ENCODE measurements at regions of chr2 and their contacts with region 1.

Region 1: DNA sequence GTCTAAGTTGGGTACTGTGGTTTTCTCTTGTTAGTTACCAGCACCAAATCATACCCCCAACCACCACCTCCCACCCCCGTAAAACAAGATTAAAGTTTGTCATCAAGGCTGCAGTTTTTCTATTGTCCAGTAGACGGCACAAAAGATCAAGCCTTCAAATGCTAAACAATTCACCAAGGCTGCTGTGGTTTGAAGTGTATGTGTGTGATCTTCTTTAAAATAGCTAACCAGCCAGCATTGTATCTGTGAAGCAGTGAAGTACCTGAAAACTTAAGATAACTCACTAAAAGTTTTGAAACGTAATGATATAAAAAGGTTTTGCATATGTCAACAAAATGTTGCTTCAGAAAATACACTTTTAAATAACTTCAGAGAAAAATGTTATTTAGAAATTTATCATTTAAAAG is 5.9 kb upstream of the MEIS1 start:
- DNase-seq: no peak
- H3K4me3 ChIP-seq: no peak overlapping the region
- H3K27ac ChIP-seq: no peak overlapping the region
- H3K4me1 ChIP-seq: peaks cover 8 to 18% (median 9%) of the 10 kb centered on the region in 4 experiments
- H3K27me3 ChIP-seq: peaks cover 49 to 100% (median 82%) of the 10 kb centered on the region in 4 experiments
- CTCF ChIP-seq: peak in 2 of 3 experiments; percentile 65 to 76; a peak in 3 of 4 replicates
- EP300 ChIP-seq: no peak
- POLR2A ChIP-seq: no peak
- RAD21 ChIP-seq: peak; percentile 85 to 94

Region 2: DNA sequence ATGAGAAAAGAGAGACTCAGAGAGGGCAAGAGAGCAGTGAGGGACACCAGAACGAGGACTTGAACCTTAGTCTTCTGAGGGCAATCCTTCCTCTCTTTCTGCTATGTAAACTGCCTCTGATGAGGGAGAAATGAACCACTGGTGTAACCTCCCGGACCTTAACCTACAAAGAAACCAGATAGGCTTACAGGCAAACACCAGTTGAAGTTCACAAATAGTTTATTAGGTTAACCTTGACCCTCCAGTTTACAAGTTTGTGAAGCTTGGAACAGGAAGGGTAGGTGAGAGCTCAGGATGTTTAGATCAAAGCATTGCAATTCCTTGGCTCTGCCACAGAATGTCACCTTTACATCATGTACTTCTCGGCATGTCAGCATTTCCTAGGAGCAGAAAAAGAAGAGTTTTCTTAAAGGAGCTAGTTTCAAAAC is 510.3 kb before region 1 on chr2:
- CTCF ChIA-PET with region 1: interaction called, 15 read pairs
- POLR2A ChIA-PET with region 1: no interaction called
- DNase-seq: no peak
- H3K4me3 ChIP-seq: no peak overlapping the region
- H3K27ac ChIP-seq: no peak overlapping the region
- H3K4me1 ChIP-seq: peaks cover 0 to 2% (median 0%) of the 10 kb centered on the region in 4 experiments; a peak in 1 of 7 replicates
- H3K27me3 ChIP-seq: no peaks in the 10 kb centered on the region
- CTCF ChIP-seq: peak in 2 of 3 experiments; percentile 15 to 52; a peak in 2 of 4 replicates
- EP300 ChIP-seq: no peak
- POLR2A ChIP-seq: no peak
- RAD21 ChIP-seq: peak; percentile 74 to 82

Region 3: DNA sequence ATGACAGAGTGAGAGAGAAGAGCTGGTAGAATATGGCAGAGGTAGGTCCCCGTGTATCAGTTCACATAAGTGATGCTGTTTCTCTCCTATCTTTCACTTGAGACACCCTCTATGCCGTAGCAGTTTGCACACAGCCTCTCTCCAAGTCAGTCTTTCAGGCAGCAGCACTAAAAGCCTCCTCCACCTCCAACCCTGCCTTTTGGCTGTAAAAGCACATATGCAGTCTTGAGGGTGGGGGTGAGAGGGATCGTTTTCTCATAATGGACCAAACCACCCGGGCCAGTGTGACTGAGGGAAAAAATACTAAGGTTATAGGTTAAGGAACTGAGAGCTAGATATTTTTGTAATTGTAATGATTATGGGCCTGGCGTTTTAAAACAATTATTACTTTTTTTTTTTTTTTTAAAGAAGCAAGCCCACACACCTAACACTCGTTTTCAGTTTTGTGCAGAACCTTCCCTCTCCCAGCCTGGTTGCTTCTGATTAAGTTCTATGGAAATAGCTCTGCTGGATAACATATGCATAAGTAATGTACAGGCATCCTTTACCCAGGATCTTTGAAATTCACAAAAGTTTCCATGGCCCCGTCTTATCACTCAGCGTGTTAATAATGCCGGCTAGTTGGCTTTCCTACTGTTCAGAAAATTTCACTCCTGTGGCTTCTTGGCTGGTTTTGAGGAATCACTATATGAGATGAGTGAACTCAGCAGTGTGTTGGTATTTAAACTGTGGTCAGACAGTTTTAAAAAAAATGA is 106.4 kb before region 1 on chr2:
- CTCF ChIA-PET with region 1: no interaction called
- POLR2A ChIA-PET with region 1: no interaction called
- DNase-seq: no peak
- H3K4me3 ChIP-seq: no peak overlapping the region
- H3K27ac ChIP-seq: no peak overlapping the region
- H3K4me1 ChIP-seq: peaks cover 0 to 7% (median 4%) of the 10 kb centered on the region in 4 experiments; a peak in 5 of 7 replicates
- H3K27me3 ChIP-seq: no peaks in the 10 kb centered on the region
- CTCF ChIP-seq: no peak
- EP300 ChIP-seq: no peak
- POLR2A ChIP-seq: no peak
- RAD21 ChIP-seq: no peak

Region 4: DNA sequence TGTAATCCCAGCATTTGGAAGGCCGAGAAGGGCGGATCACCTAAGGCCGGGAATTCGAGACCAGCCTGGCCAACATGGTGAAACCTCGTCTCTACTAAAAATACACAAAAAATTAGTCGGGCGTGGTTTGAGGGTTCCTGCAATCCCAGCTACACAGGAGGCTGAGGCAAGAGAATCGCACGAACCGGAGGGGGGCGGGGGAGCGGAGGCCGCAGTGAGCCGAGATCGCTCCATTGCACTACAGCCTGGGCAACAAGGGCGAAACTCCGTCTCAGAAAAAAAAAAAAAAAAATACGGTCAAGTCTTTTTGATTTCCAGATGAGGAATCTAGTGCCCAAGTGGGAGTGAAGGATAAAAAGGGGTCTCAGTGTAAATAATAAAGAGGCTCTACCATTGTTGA is 10.7 kb before region 1 on chr2:
- CTCF ChIA-PET with region 1: interaction called, 10 read pairs
- POLR2A ChIA-PET with region 1: interaction called, 3 read pairs
- DNase-seq: no peak
- H3K4me3 ChIP-seq: no peak overlapping the region
- H3K27ac ChIP-seq: no peak overlapping the region
- H3K4me1 ChIP-seq: peaks cover 1 to 4% (median 2%) of the 10 kb centered on the region in 4 experiments; a peak in 1 of 7 replicates
- H3K27me3 ChIP-seq: no peaks in the 10 kb centered on the region; a peak in 3 of 7 replicates
- CTCF ChIP-seq: no peak
- EP300 ChIP-seq: no peak
- POLR2A ChIP-seq: no peak
- RAD21 ChIP-seq: no peak

Region 5: DNA sequence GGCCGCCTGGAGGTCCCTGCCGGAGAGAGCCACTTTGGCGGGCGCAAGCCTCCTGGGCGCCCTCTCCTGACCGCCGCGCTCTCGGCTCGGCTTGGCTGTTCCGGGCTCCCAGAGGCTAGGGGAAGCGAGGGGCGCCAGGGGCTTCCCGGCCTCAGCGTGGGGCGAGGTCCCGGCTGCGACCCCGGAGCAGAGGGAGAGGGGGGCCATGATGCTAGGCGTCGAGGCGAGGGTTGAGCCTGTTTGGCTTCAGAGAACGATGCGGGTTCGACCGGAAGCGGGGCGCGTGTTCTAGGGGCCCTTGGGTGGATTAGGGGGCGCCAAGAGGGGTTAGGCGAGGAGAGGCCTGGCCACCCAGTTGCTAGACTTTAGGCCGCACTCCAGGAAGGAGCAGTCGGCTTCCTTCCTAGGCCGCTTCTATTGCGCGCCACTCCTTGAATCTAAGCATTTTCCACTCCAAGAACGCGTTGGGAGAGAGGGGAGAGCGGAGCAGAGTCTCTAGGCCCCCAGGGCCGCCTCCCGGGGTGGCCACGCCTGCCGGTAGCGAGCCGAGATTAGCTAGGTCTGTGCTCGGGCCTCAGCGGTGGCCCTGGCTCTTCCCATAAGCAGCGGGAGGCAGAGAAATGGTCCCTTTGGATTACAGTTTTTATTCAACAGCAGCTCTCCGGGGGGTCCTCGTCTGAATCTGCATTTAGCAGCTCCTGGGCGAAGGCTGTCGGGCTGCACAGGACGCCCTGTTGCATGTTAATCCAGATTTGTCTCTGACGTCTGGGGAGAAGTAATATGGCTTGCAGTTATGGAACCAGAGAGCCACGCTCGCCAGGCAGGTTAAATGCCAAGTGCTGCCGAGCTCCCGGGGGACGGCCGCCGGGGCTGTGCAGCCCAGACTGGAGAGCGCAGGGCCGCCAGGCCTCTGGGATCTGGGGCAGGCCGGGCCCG is 17.1 kb after region 1 on chr2:
- CTCF ChIA-PET with region 1: interaction called, 48 read pairs
- POLR2A ChIA-PET with region 1: interaction called, 6 read pairs
- DNase-seq: peak in 1 of 2 experiments; percentile 72
- H3K4me3 ChIP-seq: peak overlapping the region; percentile 16 to 63 (median 34)
- H3K27ac ChIP-seq: no peak overlapping the region
- H3K4me1 ChIP-seq: peaks cover 9 to 31% (median 13%) of the 10 kb centered on the region in 4 experiments
- H3K27me3 ChIP-seq: peaks cover 37 to 67% (median 53%) of the 10 kb centered on the region in 4 experiments
- CTCF ChIP-seq: peak; percentile 39 to 53 (median 40)
- EP300 ChIP-seq: no peak
- POLR2A ChIP-seq: no peak
- RAD21 ChIP-seq: peak; percentile 30 to 54; a peak in 3 of 4 replicates

Region 6: DNA sequence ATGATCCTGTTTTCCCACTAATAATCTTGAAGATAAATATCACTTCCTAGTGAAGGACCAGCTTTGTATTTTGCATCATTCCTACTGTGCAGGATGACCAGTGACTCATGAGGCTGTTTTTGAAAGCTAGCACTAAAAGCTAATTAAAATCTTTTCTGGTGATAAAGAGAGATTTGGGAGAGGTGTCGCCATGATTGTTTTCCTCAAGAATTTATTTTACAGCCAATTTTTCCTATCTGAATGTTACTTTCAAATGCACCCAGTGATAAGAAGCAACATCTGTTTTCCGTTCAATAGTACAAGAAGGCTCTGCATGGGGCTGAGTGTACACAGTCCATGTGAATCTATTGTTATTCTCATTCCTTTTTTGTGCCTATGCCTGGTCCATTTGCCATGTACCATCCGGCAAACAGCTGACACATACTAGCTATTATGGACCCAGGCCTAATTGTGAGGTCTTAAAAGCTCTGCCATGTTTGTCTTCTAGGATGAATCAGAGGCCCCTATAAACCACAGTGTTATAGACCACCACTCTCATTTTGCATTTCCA is 34.2 kb after region 1 on chr2:
- CTCF ChIA-PET with region 1: no interaction called
- POLR2A ChIA-PET with region 1: no interaction called
- DNase-seq: no peak
- H3K4me3 ChIP-seq: no peak overlapping the region
- H3K27ac ChIP-seq: no peak overlapping the region
- H3K4me1 ChIP-seq: no peaks in the 10 kb centered on the region
- H3K27me3 ChIP-seq: no peaks in the 10 kb centered on the region
- CTCF ChIP-seq: no peak
- EP300 ChIP-seq: no peak
- POLR2A ChIP-seq: no peak
- RAD21 ChIP-seq: no peak

Region 7: DNA sequence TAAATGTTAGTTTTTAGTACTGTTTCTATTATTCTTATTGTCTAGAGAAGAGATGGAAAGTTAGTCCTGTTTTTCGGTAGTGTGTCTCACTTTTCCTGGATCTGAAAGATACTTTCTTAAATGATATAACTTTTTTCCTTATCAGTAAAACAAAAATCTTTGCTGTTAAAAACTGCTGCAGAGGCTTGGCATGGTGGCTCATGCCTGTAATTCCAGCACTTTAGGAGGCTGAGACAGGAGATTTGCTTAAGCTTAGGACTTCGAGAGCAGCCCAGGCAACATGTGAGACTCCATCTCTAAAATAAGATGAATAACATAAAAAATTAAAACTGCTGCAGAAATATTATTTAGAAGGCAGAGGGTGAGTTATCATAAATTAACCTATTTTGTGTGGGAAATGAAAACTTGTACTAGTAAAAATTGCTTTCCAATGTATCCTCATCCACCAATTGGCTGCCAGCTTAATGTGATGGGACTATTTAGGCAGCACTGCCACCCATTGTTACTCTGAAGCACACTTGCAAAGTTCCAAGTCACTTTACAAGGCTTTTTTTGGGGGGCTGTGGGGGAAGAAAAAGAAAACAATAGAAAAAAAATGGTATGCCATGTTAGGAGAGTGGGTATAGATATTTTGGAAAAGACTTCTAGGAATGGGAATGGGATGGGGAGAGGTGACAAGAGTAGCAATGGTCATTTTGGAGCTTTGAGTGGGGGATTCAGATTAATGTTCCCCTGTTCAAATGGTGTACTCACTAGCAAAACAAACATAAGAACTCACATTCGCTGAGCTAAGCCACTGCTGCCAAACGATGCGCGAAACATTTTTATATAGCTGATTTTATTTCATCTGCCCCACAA is 68.6 kb after region 1 on chr2:
- CTCF ChIA-PET with region 1: interaction called, 13 read pairs
- POLR2A ChIA-PET with region 1: no interaction called
- DNase-seq: no peak
- H3K4me3 ChIP-seq: no peak overlapping the region
- H3K27ac ChIP-seq: no peak overlapping the region
- H3K4me1 ChIP-seq: peaks cover 6 to 15% (median 10%) of the 10 kb centered on the region in 4 experiments
- H3K27me3 ChIP-seq: no peaks in the 10 kb centered on the region
- CTCF ChIP-seq: no peak
- EP300 ChIP-seq: no peak
- POLR2A ChIP-seq: no peak
- RAD21 ChIP-seq: peak; percentile 26 to 45; a peak in 3 of 4 replicates

Region 8: GRCh38 chr2:66574701-66575624 is 145.9 kb after region 1 on chr2:
- CTCF ChIA-PET with region 1: interaction called, 161 read pairs
- POLR2A ChIA-PET with region 1: interaction called, 10 read pairs
- DNase-seq: peak in 1 of 2 experiments; percentile 64
- H3K4me3 ChIP-seq: peak overlapping the region; percentile 1 to 65 (median 43); a peak in 5 of 8 replicates
- H3K27ac ChIP-seq: no peak overlapping the region
- H3K4me1 ChIP-seq: peaks cover 5 to 29% (median 12%) of the 10 kb centered on the region in 4 experiments
- H3K27me3 ChIP-seq: peaks cover 38 to 46% (median 41%) of the 10 kb centered on the region in 4 experiments
- CTCF ChIP-seq: peak; percentile 52 to 65 (median 62)
- EP300 ChIP-seq: 0 out of 3 replicates have a peak, but pooled peaks of 1 of the 2 experiments have one; percentile 27
- POLR2A ChIP-seq: no peak
- RAD21 ChIP-seq: peak; percentile 86 to 87

Measured in H1 (cell line).